Naive thymus-derived CD4-positive, alpha-beta T cell (primary cell): ENCODE measurements at regions of chr10 and their contacts with region 1.

Region 1: DNA sequence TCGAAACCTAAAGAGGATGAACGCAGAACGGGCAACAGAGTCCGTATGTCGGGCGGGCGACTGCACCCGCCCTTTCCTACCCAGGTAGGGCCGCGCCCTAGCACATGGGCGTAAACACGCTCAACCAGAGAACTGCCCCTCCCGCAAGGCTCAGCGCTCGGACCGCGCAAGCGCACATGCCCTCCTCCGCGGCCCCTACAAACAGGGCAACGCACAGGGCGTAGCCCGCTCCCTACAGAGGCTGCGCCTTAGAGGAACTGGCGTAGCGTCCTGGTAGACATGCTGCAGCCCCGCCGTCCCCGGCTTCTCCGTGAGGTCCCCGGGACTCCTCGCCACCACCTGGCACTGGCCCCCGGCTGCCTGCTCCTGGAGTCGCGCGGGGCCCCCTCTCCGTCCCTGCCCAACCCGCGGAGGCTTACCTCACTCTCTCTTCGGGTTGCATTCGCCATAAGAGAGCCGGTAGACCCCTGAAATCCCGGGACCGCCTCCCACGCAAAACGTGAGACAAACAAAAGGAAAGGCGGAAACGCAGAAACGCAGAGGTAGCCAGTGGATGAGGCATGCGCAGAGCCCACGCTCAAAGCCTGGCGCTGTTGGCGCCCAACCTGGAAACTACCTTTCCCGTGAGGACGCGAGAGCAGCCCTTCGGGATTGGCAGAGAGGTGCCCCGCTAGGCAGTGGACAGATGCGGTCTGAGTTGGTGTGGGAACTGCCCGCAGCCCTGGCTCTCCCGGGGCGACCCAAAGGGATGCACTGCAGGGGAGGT is at the start of gene ZNF33B:
- DNase-seq: peak; percentile 84 to 97 (median 94)
- ATAC-seq: peak; percentile 96
- H3K4me3 ChIP-seq: peak within 1 kb of the TSS; percentile 98
- H3K4me3 Mint-ChIP-seq: peak within 1 kb of the TSS; percentile 86 to 99 (median 97)
- H3K27ac ChIP-seq: peak within 1 kb of the TSS; percentile 84
- H3K27ac Mint-ChIP-seq: peak within 1 kb of the TSS; percentile 95 to 99 (median 97)
- H3K4me1 ChIP-seq: peaks cover 6 to 14% of the 10 kb centered on the region in 2 donors
- H3K4me1 Mint-ChIP-seq: peaks cover 29 to 62% (median 45%) of the 10 kb centered on the region in 7 donors
- H3K27me3 ChIP-seq: no peaks in the 10 kb centered on the region
- H3K27me3 Mint-ChIP-seq: no peaks in the 10 kb centered on the region
- total RNA-seq, gene ZNF33B: 26.3 to 77.1 (median 34.8) TPM

Region 2: DNA sequence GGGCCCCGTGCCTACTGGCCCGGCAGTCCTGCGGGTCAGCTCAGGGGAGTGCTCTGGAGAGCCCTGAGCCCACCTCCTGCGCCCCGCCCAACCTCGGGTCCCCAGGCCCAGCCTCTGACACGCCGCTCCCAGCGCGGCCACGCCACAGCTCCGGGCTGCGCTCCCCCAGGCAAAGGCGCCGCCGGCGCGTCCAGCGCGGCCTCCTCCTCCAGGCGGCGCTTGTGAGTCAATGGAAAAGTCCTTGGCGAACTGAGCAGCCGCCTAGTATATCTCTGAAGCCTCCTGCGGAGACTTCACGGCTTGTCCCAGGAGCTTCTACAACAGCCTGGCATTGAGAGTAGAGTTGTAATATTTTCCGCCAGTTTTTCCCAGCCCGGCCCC is 114.9 kb after region 1 on chr10:
- CTCF ChIA-PET with region 1: no interaction called
- POLR2A ChIA-PET with region 1: no interaction called
- intact Hi-C with region 1: loop called in 1 of 2 experiments (anchors 1 kb)
- DNase-seq: peak; percentile 8 to 79 (median 51)
- ATAC-seq: peak; percentile 75
- H3K4me3 ChIP-seq: peak overlapping the region; percentile 59
- H3K4me3 Mint-ChIP-seq: peak overlapping the region; percentile 70 to 89 (median 83)
- H3K27ac ChIP-seq: no peak overlapping the region
- H3K27ac Mint-ChIP-seq: no peak overlapping the region
- H3K4me1 ChIP-seq: peaks cover 0 to 6% of the 10 kb centered on the region in 2 donors
- H3K4me1 Mint-ChIP-seq: peaks cover 0 to 8% (median 4%) of the 10 kb centered on the region in 7 donors
- H3K27me3 ChIP-seq: peaks cover 0 to 10% of the 10 kb centered on the region in 2 donors
- H3K27me3 Mint-ChIP-seq: peaks cover 59 to 71% (median 67%) of the 10 kb centered on the region in 5 donors

Region 3: DNA sequence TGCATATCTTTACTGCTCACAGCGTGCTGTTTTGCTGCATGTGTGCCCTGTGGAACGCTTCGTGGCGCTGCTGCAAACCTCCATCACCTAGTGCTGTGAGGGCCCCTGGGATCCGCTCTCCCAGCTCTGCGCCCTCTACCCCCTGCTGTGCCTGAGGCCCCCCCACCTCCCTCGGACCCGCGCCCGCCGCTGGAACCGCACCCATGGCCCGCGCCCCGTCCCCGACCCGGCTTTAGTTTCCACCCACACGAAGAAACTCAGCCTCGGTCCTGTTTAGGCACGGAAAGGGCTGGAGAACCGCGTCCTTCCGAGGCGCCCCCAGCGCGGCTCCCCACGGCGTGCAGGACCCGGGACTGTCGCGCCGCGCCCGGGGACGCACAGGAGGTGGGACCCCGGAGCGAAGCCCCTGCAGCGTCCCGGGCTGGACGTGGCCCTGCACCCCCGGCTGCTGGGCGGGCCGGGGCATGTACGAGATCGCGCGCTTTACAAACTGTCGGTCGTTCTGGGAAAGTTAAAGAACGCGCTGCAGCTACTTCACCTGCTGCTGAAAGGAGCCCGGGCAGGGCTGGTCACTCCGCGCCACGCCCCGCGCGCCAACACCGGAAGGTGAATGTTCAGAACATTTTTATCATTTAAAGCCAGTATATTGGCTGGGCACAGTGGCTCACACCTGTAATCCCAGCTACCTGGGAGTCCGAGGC is 198.7 kb after region 1 on chr10:
- CTCF ChIA-PET with region 1: no interaction called
- POLR2A ChIA-PET with region 1: no interaction called
- intact Hi-C with region 1: no loop called
- DNase-seq: no peak
- ATAC-seq: no peak
- H3K4me3 ChIP-seq: no peak overlapping the region
- H3K4me3 Mint-ChIP-seq: peak overlapping the region in 4 of 10 donors; percentile 11 to 55 (median 26)
- H3K27ac ChIP-seq: no peak overlapping the region
- H3K27ac Mint-ChIP-seq: no peak overlapping the region
- H3K4me1 ChIP-seq: no peaks in the 10 kb centered on the region
- H3K4me1 Mint-ChIP-seq: peaks cover 0 to 4% (median 0%) of the 10 kb centered on the region in 7 donors
- H3K27me3 ChIP-seq: no peaks in the 10 kb centered on the region
- H3K27me3 Mint-ChIP-seq: peaks cover 24 to 42% (median 30%) of the 10 kb centered on the region in 5 donors

Region 4: GRCh38 chr10:42933448-42934340 is 295.5 kb after region 1 on chr10:
- CTCF ChIA-PET with region 1: no interaction called
- POLR2A ChIA-PET with region 1: no interaction called
- intact Hi-C with region 1: loop called in 1 of 2 experiments (anchors 1 kb)
- DNase-seq: peak in 8 of 9 donors; percentile 24 to 81 (median 66)
- ATAC-seq: peak; percentile 66
- H3K4me3 ChIP-seq: peak overlapping the region; percentile 60
- H3K4me3 Mint-ChIP-seq: peak overlapping the region in 9 of 10 donors; percentile 87 to 93 (median 91)
- H3K27ac ChIP-seq: peak overlapping the region; percentile 73
- H3K27ac Mint-ChIP-seq: peak overlapping the region in 7 of 9 donors; percentile 82 to 95 (median 90)
- H3K4me1 ChIP-seq: peaks cover 0 to 12% of the 10 kb centered on the region in 2 donors
- H3K4me1 Mint-ChIP-seq: peaks cover 9 to 25% (median 19%) of the 10 kb centered on the region in 7 donors
- H3K27me3 ChIP-seq: no peaks in the 10 kb centered on the region
- H3K27me3 Mint-ChIP-seq: peaks cover 5 to 38% (median 31%) of the 10 kb centered on the region in 5 donors

Region 5: GRCh38 chr10:43287056-43288007 is 649.1 kb after region 1 on chr10:
- CTCF ChIA-PET with region 1: no interaction called
- POLR2A ChIA-PET with region 1: no interaction called
- intact Hi-C with region 1: loop called in 1 of 2 experiments (anchors 10 kb)
- DNase-seq: peak in 3 of 9 donors; percentile 26 to 66 (median 37)
- ATAC-seq: peak; percentile 79
- H3K4me3 ChIP-seq: peak overlapping the region; percentile 21
- H3K4me3 Mint-ChIP-seq: peak overlapping the region; percentile 2 to 75 (median 64)
- H3K27ac ChIP-seq: no peak overlapping the region
- H3K27ac Mint-ChIP-seq: peak overlapping the region; percentile 62 to 94 (median 84)
- H3K4me1 ChIP-seq: peaks cover 16 to 25% of the 10 kb centered on the region in 2 donors
- H3K4me1 Mint-ChIP-seq: peaks cover 19 to 61% (median 26%) of the 10 kb centered on the region in 7 donors
- H3K27me3 ChIP-seq: no peaks in the 10 kb centered on the region
- H3K27me3 Mint-ChIP-seq: peaks cover 0 to 25% (median 4%) of the 10 kb centered on the region in 5 donors

Region 6: GRCh38 chr10:43574001-43574892 is 936.0 kb after region 1 on chr10 and contains the start of gene ZNF239:
- CTCF ChIA-PET with region 1: no interaction called
- POLR2A ChIA-PET with region 1: no interaction called
- intact Hi-C with region 1: loop called in 1 of 2 experiments (anchors 1 kb)
- DNase-seq: peak; percentile 62 to 82 (median 78)
- ATAC-seq: peak; percentile 91
- H3K4me3 ChIP-seq: peak within 1 kb of the TSS; percentile 72
- H3K4me3 Mint-ChIP-seq: peak within 1 kb of the TSS; percentile 72 to 93 (median 90)
- H3K27ac ChIP-seq: peak within 1 kb of the TSS; percentile 66
- H3K27ac Mint-ChIP-seq: peak within 1 kb of the TSS; percentile 29 to 96 (median 93)
- H3K4me1 ChIP-seq: peaks cover 14 to 19% of the 10 kb centered on the region in 2 donors
- H3K4me1 Mint-ChIP-seq: peaks cover 28 to 64% (median 61%) of the 10 kb centered on the region in 7 donors
- H3K27me3 ChIP-seq: no peaks in the 10 kb centered on the region
- H3K27me3 Mint-ChIP-seq: peaks cover 0 to 3% (median 0%) of the 10 kb centered on the region in 5 donors
- total RNA-seq, gene ZNF239: 1.7 to 8.5 (median 2.3) TPM